Activated CD4-positive, alpha-beta T cell treated with anti-CD3 and anti-CD28 coated beads, Interleukin-2, amount 10 ng/mL, durations not matched to agents 24 days and 14 days (primary cell): ENCODE measurements at regions of chr17 and their contacts with region 1.

Region 1: DNA sequence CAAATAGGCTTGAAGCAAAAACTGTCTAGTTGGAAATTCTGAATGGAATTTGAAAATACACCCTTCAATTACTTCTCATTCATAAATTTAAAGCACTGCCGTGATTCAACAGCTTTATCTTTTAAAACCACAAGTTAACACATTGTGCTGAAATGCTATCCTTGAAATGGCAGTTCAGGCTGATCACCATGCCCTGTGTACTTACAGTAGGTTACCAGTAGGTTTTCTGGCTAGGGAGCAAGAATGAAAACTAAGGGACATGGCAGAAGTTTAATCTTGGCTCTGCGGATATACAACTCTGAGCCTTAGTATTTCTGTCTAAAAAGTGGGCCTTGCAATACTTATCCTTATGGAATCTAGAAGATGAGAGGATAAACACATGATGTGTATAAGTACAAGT is 28.0 kb downstream of the NXPH3 start:
- DNase-seq: no peak
- H3K4me3 Mint-ChIP-seq: no peak overlapping the region
- H3K27ac Mint-ChIP-seq: no peak overlapping the region
- H3K4me1 Mint-ChIP-seq: peaks cover 2% of the 10 kb centered on the region
- H3K27me3 Mint-ChIP-seq: no peaks in the 10 kb centered on the region

Region 2: DNA sequence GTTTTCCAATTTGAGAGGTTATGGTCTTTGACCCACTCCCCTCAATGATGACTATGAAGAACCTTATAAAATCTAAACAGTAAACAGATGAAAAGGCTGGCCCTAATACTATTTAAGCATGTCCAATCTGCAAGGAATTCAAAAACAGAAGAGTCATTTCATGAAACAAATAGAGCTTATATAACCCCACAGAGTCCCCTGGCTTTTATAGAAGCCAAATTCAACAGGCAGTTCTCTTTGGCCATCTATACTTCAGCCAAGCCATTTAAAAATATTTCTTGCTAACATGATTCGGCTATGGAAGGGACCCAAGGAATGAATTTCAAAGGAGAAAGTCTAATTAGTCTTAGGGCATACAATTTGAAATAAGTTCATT is 30.8 kb after region 1 on chr17:
- intact Hi-C with region 1: no loop called
- DNase-seq: no peak
- H3K4me3 Mint-ChIP-seq: no peak overlapping the region
- H3K27ac Mint-ChIP-seq: no peak overlapping the region
- H3K4me1 Mint-ChIP-seq: peaks cover 11% of the 10 kb centered on the region
- H3K27me3 Mint-ChIP-seq: no peaks in the 10 kb centered on the region

Region 3: DNA sequence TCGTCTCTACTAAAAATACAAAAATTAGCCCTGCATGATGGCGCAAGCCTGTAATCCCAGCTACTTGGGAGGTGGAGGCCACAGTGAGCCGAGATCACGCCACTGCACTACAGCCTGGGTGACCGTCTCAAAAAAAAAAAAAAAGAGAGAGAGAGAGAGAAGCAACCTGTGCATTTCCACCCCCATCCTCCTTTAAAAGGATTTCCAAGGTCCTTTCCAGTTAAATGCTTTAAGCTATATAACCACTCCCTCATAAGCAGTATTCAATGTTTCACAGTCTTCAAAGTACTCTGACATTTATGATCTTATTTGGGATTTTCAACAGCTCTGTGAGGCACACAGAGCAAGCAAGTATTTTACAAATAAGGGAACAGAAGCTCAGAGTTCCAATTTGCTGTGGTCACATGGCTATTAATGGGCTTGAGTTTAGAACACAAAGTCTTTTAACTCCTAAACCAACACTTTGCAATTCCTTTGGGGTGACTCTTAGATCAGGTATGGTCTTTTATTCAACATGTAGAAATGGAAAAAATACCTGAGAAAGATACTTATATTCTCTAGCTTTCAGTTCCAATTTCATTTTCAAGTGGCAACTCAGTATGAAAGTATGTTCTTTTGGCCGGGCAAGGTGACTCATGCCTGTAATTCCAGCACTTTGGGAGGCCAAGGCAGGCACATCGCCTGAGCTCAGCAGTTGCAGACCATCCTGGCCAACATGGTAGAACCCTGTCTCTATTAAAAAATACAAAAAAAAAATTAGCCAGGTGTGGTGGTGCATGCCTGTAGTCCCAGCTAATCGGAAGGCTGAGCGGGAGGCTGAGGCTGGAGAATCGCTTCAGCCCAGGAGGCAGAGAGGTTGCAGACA is 42.9 kb after region 1 on chr17:
- intact Hi-C with region 1: loop called (anchors 5 kb)
- DNase-seq: peak; percentile 76
- H3K4me3 Mint-ChIP-seq: peak overlapping the region; percentile 58
- H3K27ac Mint-ChIP-seq: peak overlapping the region; percentile 80
- H3K4me1 Mint-ChIP-seq: peaks cover 31% of the 10 kb centered on the region
- H3K27me3 Mint-ChIP-seq: no peaks in the 10 kb centered on the region